H1 (cell line): ENCODE measurements at regions of chr12 and their contacts with region 1.

Region 1: GRCh38 chr12:103930034-103930786 is at the start of gene HSP90B1:
- DNase-seq: peak; percentile 98 to 100
- H3K4me3 ChIP-seq: peak within 1 kb of the TSS; percentile 80 to 97 (median 91)
- H3K27ac ChIP-seq: peak within 1 kb of the TSS; percentile 88
- H3K4me1 ChIP-seq: peaks cover 0 to 3% (median 0%) of the 10 kb centered on the region in 4 experiments; a peak in 4 of 7 replicates
- H3K27me3 ChIP-seq: no peaks in the 10 kb centered on the region; a peak in 1 of 7 replicates
- CTCF ChIP-seq: no peak
- EP300 ChIP-seq: peak in 1 of 2 experiments; percentile 10; a peak in 1 of 3 replicates
- POLR2A ChIP-seq: peak; percentile 93 to 99
- RAD21 ChIP-seq: no peak
- total RNA-seq, gene HSP90B1: 837 and 847 TPM in 2 replicates

Region 2: GRCh38 chr12:103840876-103841689 is 89.1 kb before region 1 on chr12 and contains the start of gene NT5DC3:
- CTCF ChIA-PET with region 1: no interaction called
- POLR2A ChIA-PET with region 1: interaction called, 10 read pairs
- DNase-seq: peak; percentile 60 to 91
- H3K4me3 ChIP-seq: peak within 1 kb of the TSS; percentile 79 to 86 (median 82)
- H3K27ac ChIP-seq: no peak within 1 kb of the TSS
- H3K4me1 ChIP-seq: 0 out of 7 replicates have a peak, but pooled peaks cover 0 to 3% (median 0%) of the 10 kb centered on the region in 4 experiments
- H3K27me3 ChIP-seq: peaks cover 0 to 6% (median 2%) of the 10 kb centered on the region in 4 experiments; a peak in 6 of 7 replicates
- CTCF ChIP-seq: peak in 1 of 3 experiments; percentile 2; a peak in 1 of 4 replicates
- EP300 ChIP-seq: no peak
- POLR2A ChIP-seq: peak; percentile 89
- RAD21 ChIP-seq: no peak
- total RNA-seq, gene NT5DC3: 11.9 and 14.8 TPM in 2 replicates

Region 3: DNA sequence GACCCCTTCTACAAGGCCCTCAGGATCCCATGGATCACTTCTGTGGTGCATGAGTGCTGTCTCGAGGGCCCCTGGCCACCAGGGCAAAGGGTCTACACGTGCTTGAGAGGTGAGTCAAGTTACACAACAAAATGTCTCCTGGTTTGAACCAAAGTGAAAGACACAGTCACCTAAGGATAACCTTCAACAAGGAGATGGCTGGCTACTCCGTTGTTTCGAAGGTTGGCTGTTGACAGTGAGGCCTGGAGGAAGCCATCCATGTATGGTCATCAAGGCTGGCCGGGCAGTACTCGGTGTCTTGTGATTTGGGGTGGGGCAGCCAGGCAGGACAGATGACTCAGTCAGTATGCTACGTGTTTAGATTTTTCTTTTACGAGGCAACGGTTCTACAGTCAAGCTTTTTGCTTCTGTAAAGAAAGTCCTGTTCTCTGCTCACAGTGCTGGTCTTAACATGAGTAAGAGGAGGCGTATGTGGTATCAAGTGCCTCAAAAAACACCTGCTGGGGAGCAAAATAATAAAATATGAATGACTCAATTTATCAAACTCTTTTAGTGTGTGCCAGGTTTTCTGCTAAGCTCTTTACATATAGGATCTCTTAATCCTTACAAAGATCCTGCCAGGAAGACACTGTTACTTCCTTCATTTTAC is 71.1 kb before region 1 on chr12:
- CTCF ChIA-PET with region 1: no interaction called
- POLR2A ChIA-PET with region 1: no interaction called
- DNase-seq: no peak
- H3K4me3 ChIP-seq: no peak overlapping the region
- H3K27ac ChIP-seq: no peak overlapping the region
- H3K4me1 ChIP-seq: no peaks in the 10 kb centered on the region
- H3K27me3 ChIP-seq: no peaks in the 10 kb centered on the region
- CTCF ChIP-seq: no peak
- EP300 ChIP-seq: no peak
- POLR2A ChIP-seq: no peak
- RAD21 ChIP-seq: no peak

Region 4: GRCh38 chr12:103884316-103884715 is 45.9 kb before region 1 on chr12:
- CTCF ChIA-PET with region 1: interaction called, 4 read pairs
- POLR2A ChIA-PET with region 1: interaction called, 10 read pairs
- DNase-seq: no peak
- H3K4me3 ChIP-seq: no peak overlapping the region
- H3K27ac ChIP-seq: no peak overlapping the region
- H3K4me1 ChIP-seq: no peaks in the 10 kb centered on the region
- H3K27me3 ChIP-seq: no peaks in the 10 kb centered on the region
- CTCF ChIP-seq: peak in 2 of 3 experiments; percentile 32 to 42; a peak in 2 of 4 replicates
- EP300 ChIP-seq: no peak
- POLR2A ChIP-seq: no peak
- RAD21 ChIP-seq: peak; percentile 76 to 79

Region 5: DNA sequence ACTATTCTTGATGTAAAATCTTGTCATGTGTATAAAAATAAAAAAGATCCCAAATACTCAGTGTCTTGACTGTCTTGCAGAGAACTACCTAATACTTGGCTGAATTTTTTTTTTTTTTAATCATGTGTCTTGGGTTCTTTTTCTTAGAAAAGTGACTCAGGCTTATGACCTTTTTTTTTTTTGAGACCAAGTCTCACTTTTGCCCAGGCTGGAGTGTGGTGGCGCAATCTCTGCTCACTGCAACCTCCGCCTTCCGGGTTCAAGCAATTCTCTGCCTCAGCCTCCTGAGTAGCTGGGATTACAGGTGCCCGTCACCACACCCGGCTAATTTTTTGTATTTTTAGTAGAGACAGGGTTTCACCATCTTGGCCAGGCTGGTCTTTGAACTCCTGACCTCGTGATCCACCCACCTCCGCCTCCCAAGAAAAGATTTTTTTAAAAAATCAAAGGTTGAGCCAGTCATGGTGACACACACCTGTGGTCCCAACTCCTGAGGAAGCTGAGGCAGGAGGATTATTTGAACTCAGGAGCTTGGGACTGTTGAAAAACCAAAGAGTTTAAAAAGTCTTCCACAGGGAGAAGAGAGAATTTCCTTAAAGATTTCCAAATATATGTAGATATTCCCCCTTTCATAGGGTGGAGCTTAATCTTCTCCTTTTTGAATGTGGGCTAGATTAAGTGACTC is 17.8 kb after region 1 on chr12:
- CTCF ChIA-PET with region 1: interaction called, 3 read pairs
- POLR2A ChIA-PET with region 1: interaction called, 80 read pairs
- DNase-seq: no peak
- H3K4me3 ChIP-seq: no peak overlapping the region
- H3K27ac ChIP-seq: no peak overlapping the region
- H3K4me1 ChIP-seq: no peaks in the 10 kb centered on the region
- H3K27me3 ChIP-seq: no peaks in the 10 kb centered on the region
- CTCF ChIP-seq: no peak
- EP300 ChIP-seq: no peak
- POLR2A ChIP-seq: no peak
- RAD21 ChIP-seq: no peak

Region 6: DNA sequence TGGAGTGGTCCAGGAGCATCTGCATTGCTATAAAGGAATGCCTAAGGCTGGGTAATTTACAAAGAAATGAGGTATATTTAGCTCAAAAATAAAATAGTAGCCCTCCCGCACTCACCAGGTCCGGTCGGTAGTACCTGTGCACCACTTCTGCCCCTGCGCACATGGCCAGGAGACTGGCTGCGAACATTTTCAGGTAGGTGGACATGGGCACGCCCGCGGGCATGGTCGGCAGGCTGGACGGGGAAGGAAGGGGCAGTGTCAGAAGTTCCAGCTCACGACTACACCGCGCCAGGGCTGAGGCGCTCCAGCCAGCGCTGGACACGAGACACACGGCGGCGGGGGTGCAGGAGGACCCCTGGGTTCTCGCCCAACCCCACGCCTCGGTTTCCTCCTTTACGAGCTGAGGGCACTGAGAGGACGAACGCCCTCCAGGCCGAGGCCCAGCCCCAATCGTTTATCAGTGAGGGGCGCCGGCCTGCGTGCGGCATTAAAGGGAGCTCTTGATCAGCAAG is 26.4 kb after region 1 on chr12:
- CTCF ChIA-PET with region 1: interaction called, 4 read pairs
- POLR2A ChIA-PET with region 1: interaction called, 80 read pairs
- DNase-seq: peak in 1 of 2 experiments; percentile 2
- H3K4me3 ChIP-seq: peak overlapping the region; percentile 57 to 97 (median 92)
- H3K27ac ChIP-seq: peak overlapping the region; percentile 86
- H3K4me1 ChIP-seq: peaks cover 0 to 7% (median 2%) of the 10 kb centered on the region in 4 experiments; a peak in 3 of 7 replicates
- H3K27me3 ChIP-seq: no peaks in the 10 kb centered on the region
- CTCF ChIP-seq: no peak
- EP300 ChIP-seq: no peak
- POLR2A ChIP-seq: no peak
- RAD21 ChIP-seq: no peak

Region 7: GRCh38 chr12:103965590-103966504 is 35.6 kb after region 1 on chr12 and contains the start of gene TDG:
- CTCF ChIA-PET with region 1: no interaction called
- POLR2A ChIA-PET with region 1: interaction called, 39 read pairs
- DNase-seq: peak; percentile 93 to 96
- H3K4me3 ChIP-seq: peak within 1 kb of the TSS; percentile 80 to 91 (median 88)
- H3K27ac ChIP-seq: peak within 1 kb of the TSS; percentile 94
- H3K4me1 ChIP-seq: peaks cover 0 to 9% (median 2%) of the 10 kb centered on the region in 4 experiments; a peak in 4 of 7 replicates
- H3K27me3 ChIP-seq: no peaks in the 10 kb centered on the region
- CTCF ChIP-seq: no peak
- EP300 ChIP-seq: no peak
- POLR2A ChIP-seq: peak; percentile 94 to 98
- RAD21 ChIP-seq: no peak
- total RNA-seq, gene TDG: 47.8 and 49.0 TPM in 2 replicates